ENCODE measurements at regions of chr15 and their contacts with region 1.

Region 1: GRCh38 chr15:67065444-67066093 is at the start of gene SMAD3:
- DNase-seq: peak; percentile 66 to 84
- H3K4me3 ChIP-seq: peak within 1 kb of the TSS; percentile 77 to 94 (median 80)
- H3K27ac ChIP-seq: no peak within 1 kb of the TSS
- H3K4me1 ChIP-seq: peaks cover 12 to 29% (median 14%) of the 10 kb centered on the region in 4 experiments
- H3K27me3 ChIP-seq: peaks cover 8 to 47% (median 35%) of the 10 kb centered on the region in 4 experiments
- CTCF ChIP-seq: no peak
- EP300 ChIP-seq: no peak
- POLR2A ChIP-seq: peak in 1 of 2 experiments; percentile 60; a peak in 2 of 3 replicates
- RAD21 ChIP-seq: no peak; a peak in 1 of 4 replicates
- total RNA-seq, gene SMAD3: 11.1 and 12.4 TPM in 2 replicates

Region 2: GRCh38 chr15:67033571-67034044 is 32.0 kb before region 1 on chr15:
- CTCF ChIA-PET with region 1: interaction called, 4 read pairs
- POLR2A ChIA-PET with region 1: interaction called, 20 read pairs
- DNase-seq: peak in 1 of 2 experiments; percentile 59
- H3K4me3 ChIP-seq: peak overlapping the region; percentile 1 to 50 (median 6); a peak in 6 of 8 replicates
- H3K27ac ChIP-seq: no peak overlapping the region
- H3K4me1 ChIP-seq: peaks cover 11 to 48% (median 25%) of the 10 kb centered on the region in 4 experiments
- H3K27me3 ChIP-seq: peaks cover 2 to 34% (median 25%) of the 10 kb centered on the region in 4 experiments
- CTCF ChIP-seq: 0 out of 4 replicates have a peak, but pooled peaks of 1 of the 3 experiments have one; percentile 1
- EP300 ChIP-seq: no peak
- POLR2A ChIP-seq: no peak
- RAD21 ChIP-seq: peak; percentile 17 to 25; a peak in 2 of 4 replicates

Region 3: GRCh38 chr15:67048281-67049279 is 17.0 kb before region 1 on chr15:
- CTCF ChIA-PET with region 1: interaction called, 3 read pairs
- POLR2A ChIA-PET with region 1: interaction called, 21 read pairs
- DNase-seq: no peak
- H3K4me3 ChIP-seq: no peak overlapping the region
- H3K27ac ChIP-seq: no peak overlapping the region
- H3K4me1 ChIP-seq: peaks cover 4% of the 10 kb centered on the region in 4 experiments; a peak in 5 of 7 replicates
- H3K27me3 ChIP-seq: no peaks in the 10 kb centered on the region
- CTCF ChIP-seq: no peak
- EP300 ChIP-seq: no peak
- POLR2A ChIP-seq: no peak
- RAD21 ChIP-seq: no peak

Region 4: GRCh38 chr15:67080900-67081431 is 15.4 kb after region 1 on chr15:
- CTCF ChIA-PET with region 1: interaction called, 23 read pairs
- POLR2A ChIA-PET with region 1: interaction called, 7 read pairs
- DNase-seq: no peak
- H3K4me3 ChIP-seq: no peak overlapping the region
- H3K27ac ChIP-seq: no peak overlapping the region
- H3K4me1 ChIP-seq: peaks cover 0 to 11% (median 6%) of the 10 kb centered on the region in 4 experiments
- H3K27me3 ChIP-seq: no peaks in the 10 kb centered on the region
- CTCF ChIP-seq: peak in 2 of 3 experiments; percentile 25 to 32; a peak in 2 of 4 replicates
- EP300 ChIP-seq: no peak
- POLR2A ChIP-seq: no peak
- RAD21 ChIP-seq: peak; percentile 26 to 57